HepG2 (cell line): ENCODE measurements at regions of chr12 and their contacts with region 1.

Region 1: DNA sequence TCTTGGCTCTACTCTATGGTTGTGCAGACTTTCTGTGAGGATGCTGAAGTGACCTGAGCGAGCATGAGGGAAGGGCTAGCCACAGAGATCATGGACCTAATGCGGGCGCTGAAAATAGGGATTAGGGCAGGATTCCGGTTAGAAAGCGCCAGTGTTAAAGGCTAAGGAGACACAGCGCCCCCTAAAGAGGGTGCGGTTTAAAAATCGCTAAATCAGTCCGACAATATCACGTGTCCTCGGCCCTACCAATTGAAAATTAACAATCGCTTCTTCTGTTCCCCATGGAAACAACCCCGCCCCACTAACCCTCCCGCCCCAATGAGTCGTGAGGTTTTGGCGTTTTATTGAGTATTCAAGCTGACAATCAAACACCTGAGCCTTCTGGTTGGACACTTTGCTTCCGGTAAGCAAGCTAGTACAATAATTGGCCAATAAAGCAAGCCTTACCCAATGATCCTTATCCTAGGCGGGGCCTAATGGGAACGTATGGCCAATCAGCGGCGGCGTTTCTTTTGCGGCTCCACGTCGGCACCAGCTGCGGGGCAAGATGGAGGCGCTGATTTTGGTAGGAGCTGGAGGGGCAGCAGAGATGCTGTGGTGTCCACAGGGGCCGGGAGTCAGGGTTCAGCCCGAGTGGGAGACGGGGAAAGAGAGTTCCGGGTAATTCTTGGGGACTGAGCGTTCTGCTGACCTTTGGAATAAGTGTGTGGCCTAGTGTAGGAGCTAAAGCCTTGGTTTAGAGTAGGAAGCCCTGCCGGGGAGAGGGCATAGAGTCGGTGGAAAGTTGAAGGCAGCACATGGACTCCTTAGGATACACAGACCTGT is at the start of gene COPZ1:
- DNase-seq: peak; percentile 100
- ATAC-seq: peak; percentile 95
- H3K4me3 ChIP-seq: peak within 1 kb of the TSS; percentile 82 to 84 (median 83)
- H3K27ac ChIP-seq: peak within 1 kb of the TSS; percentile 89
- H3K4me1 ChIP-seq: peaks cover 44% of the 10 kb centered on the region
- H3K27me3 ChIP-seq: no peaks in the 10 kb centered on the region; a peak in 1 of 5 replicates
- CTCF ChIP-seq: peak; percentile 90
- EP300 ChIP-seq: no peak
- POLR2A ChIP-seq: peak; percentile 78 to 96
- RAD21 ChIP-seq: peak; percentile 79
- total RNA-seq, gene COPZ1: 125 and 201 TPM in 2 replicates

Region 2: DNA sequence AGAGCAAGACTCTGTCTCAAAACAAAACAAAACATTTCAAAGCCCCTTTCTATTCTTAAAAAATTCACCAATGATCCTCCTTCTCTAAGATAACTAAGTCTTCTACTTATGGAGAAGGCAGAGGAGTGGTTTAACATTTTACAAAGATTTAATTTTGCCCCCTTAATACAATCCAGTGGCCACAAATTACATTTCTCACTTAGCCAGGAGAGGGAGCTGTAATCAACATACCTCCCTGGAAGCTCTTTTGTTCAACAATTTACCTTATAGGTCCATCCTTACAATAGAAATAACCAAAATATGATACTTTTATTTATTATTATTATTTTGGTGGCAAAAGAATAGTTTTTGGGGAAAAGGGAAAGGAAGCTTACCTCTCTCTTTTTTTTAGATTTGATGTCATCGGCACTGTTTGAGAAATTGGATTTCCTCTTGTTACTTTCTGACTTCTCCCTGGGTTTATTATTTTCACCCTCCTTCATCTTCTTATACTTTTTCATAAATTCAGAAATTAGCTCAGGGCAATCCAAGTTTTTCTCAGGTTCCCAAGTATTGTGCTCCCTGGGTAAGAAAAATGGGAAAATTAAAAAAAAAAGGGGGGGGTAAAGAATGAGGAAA is 73.1 kb before region 1 on chr12:
- CTCF ChIA-PET with region 1: interaction called, 9 read pairs
- POLR2A ChIA-PET with region 1: no interaction called
- in situ Hi-C with region 1: no loop called
- intact Hi-C with region 1: loop called (anchors 1 kb)
- DNase-seq: peak; percentile 38
- ATAC-seq: peak; percentile 52; the same call in 1 of the 3 replicates
- H3K4me3 ChIP-seq: no peak overlapping the region
- H3K27ac ChIP-seq: no peak overlapping the region
- H3K4me1 ChIP-seq: no peaks in the 10 kb centered on the region
- H3K27me3 ChIP-seq: no peaks in the 10 kb centered on the region
- CTCF ChIP-seq: peak; percentile 59
- EP300 ChIP-seq: no peak
- POLR2A ChIP-seq: no peak
- RAD21 ChIP-seq: peak; percentile 32; the same call in 1 of the 2 replicates

Region 3: DNA sequence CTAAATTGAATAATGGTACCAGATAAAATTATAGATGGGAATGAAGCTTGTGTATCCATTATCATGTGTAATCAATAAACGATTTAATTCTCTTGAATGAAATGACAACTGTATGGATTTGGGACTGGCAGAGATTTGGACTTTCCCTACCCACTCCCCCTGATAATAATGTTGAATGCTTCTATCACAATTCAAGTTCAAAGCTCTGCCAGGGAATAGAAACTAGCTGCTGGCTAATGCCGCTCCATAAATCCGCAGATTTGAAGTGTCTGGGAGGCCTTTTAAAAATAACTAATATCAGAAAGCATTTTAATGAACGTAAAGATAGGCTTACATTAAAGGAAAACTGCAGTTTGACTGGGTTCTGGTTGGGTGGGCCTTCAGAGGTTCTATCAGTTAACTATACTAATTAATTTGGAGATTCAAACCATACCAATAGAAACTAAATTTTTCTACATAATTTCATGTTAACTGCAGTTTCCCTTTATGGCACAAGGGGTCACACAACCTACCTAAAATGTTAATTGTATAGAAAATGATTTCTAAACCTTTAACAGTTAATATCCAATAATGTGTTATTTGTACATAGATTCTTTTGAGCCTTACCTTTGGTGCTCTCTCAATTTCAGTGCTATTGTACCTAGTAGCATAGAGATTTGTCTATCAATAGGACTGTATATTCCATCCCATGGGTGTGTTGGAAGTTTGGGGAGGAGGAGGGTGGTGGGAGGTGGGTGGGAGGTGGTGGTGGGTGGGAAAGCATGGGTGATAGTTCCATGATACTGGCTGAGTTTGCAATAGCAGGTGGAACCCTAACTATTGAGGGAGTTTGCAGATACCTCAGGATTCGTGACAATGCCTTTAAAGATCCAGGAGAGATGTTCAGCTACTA is 39.4 kb before region 1 on chr12:
- CTCF ChIA-PET with region 1: no interaction called
- POLR2A ChIA-PET with region 1: interaction called, 87 read pairs
- in situ Hi-C with region 1: loop called (anchors 5 kb)
- intact Hi-C with region 1: loop called (anchors 1 kb)
- DNase-seq: no peak
- ATAC-seq: no peak
- H3K4me3 ChIP-seq: no peak overlapping the region; a peak in 1 of 6 replicates
- H3K27ac ChIP-seq: peak overlapping the region; percentile 16
- H3K4me1 ChIP-seq: peaks cover 48% of the 10 kb centered on the region
- H3K27me3 ChIP-seq: no peaks in the 10 kb centered on the region; a peak in 1 of 5 replicates
- CTCF ChIP-seq: no peak
- EP300 ChIP-seq: no peak
- POLR2A ChIP-seq: no peak; a peak in 1 of 4 replicates
- RAD21 ChIP-seq: no peak

Region 4: DNA sequence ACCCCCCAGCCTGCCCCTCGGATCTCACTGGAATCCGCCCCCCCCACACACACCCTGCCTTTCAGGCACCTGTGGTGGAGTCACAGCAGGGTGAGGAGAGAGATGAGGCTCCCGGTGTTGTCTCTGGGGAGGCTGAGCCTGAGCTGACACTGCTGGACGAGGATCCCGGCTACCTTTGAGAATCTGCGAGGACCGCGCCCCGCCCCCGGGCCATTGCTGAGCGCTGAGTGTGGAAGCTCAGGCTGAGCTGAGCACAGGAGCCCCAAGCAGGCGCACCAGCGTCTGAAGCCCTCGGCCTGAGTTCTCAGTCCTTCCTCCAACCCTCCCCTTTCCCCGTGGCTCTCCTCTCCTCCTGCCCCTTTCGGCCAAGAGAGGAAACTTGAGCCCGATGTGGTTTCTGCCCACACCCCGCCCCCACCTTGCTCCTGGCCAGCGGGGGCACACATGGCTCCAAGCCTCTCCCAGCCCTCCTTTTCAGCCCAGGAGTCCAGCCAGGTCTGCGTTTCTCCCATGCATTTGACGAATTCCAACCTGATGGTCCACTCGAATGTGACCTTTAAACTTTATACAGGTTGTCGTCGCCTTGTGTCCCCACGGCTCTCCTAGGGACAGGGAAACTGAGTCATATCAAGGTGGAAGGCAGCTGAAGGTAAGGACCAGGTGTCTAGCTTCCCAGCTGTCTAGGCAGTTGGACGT is 23.9 kb before region 1 on chr12 and contains the start of gene NFE2:
- CTCF ChIA-PET with region 1: interaction called, 3 read pairs
- POLR2A ChIA-PET with region 1: interaction called, 73 read pairs
- in situ Hi-C with region 1: no loop called
- intact Hi-C with region 1: no loop called
- DNase-seq: peak; percentile 58
- ATAC-seq: peak; percentile 87
- H3K4me3 ChIP-seq: peak within 1 kb of the TSS; percentile 56 to 78 (median 63)
- H3K27ac ChIP-seq: peak within 1 kb of the TSS; percentile 91
- H3K4me1 ChIP-seq: peaks cover 82% of the 10 kb centered on the region
- H3K27me3 ChIP-seq: no peaks in the 10 kb centered on the region
- CTCF ChIP-seq: no peak; the same call in 1 of the 2 replicates
- EP300 ChIP-seq: no peak; a peak in 1 of 4 replicates
- POLR2A ChIP-seq: peak; percentile 51 to 72
- RAD21 ChIP-seq: no peak
- total RNA-seq, gene NFE2: 7.8 and 8.5 TPM in 2 replicates

Region 5: GRCh38 chr12:54337280-54337842 is 12.5 kb after region 1 on chr12:
- CTCF ChIA-PET with region 1: no interaction called
- POLR2A ChIA-PET with region 1: interaction called, 25 read pairs
- in situ Hi-C with region 1: no loop called
- intact Hi-C with region 1: no loop called
- DNase-seq: peak; percentile 55
- ATAC-seq: peak; percentile 66
- H3K4me3 ChIP-seq: no peak overlapping the region
- H3K27ac ChIP-seq: peak overlapping the region; percentile 12
- H3K4me1 ChIP-seq: peaks cover 70% of the 10 kb centered on the region
- H3K27me3 ChIP-seq: no peaks in the 10 kb centered on the region
- CTCF ChIP-seq: no peak
- EP300 ChIP-seq: no peak; a peak in 1 of 4 replicates
- POLR2A ChIP-seq: no peak
- RAD21 ChIP-seq: no peak

Region 6: GRCh38 chr12:54359033-54359761 is 34.4 kb after region 1 on chr12:
- CTCF ChIA-PET with region 1: interaction called, 3 read pairs
- POLR2A ChIA-PET with region 1: interaction called, 22 read pairs
- in situ Hi-C with region 1: no loop called
- intact Hi-C with region 1: loop called (anchors 2 kb)
- DNase-seq: peak; percentile 98
- ATAC-seq: peak; percentile 95
- H3K4me3 ChIP-seq: peak overlapping the region; percentile 75 to 81 (median 78)
- H3K27ac ChIP-seq: peak overlapping the region; percentile 52
- H3K4me1 ChIP-seq: peaks cover 42% of the 10 kb centered on the region
- H3K27me3 ChIP-seq: no peaks in the 10 kb centered on the region; a peak in 1 of 5 replicates
- CTCF ChIP-seq: no peak
- EP300 ChIP-seq: peak in 1 of 2 experiments; percentile 41; a peak in 1 of 4 replicates
- POLR2A ChIP-seq: peak in 1 of 2 experiments; percentile 41
- RAD21 ChIP-seq: no peak

Region 7: GRCh38 chr12:54701940-54702592 is 377.2 kb after region 1 on chr12:
- CTCF ChIA-PET with region 1: no interaction called
- POLR2A ChIA-PET with region 1: no interaction called
- in situ Hi-C with region 1: no loop called
- intact Hi-C with region 1: no loop called
- DNase-seq: peak; percentile 36
- ATAC-seq: peak; percentile 50; the same call in 2 of the 3 replicates
- H3K4me3 ChIP-seq: no peak overlapping the region
- H3K27ac ChIP-seq: no peak overlapping the region
- H3K4me1 ChIP-seq: no peaks in the 10 kb centered on the region
- H3K27me3 ChIP-seq: no peaks in the 10 kb centered on the region; a peak in 1 of 5 replicates
- CTCF ChIP-seq: peak; percentile 58
- EP300 ChIP-seq: no peak
- POLR2A ChIP-seq: no peak
- RAD21 ChIP-seq: peak; percentile 27; the same call in 1 of the 2 replicates